Dorsolateral prefrontal cortex (tissue), 120 donors: ENCODE measurements at regions of chr1 and their contacts with region 1.

Region 1: DNA sequence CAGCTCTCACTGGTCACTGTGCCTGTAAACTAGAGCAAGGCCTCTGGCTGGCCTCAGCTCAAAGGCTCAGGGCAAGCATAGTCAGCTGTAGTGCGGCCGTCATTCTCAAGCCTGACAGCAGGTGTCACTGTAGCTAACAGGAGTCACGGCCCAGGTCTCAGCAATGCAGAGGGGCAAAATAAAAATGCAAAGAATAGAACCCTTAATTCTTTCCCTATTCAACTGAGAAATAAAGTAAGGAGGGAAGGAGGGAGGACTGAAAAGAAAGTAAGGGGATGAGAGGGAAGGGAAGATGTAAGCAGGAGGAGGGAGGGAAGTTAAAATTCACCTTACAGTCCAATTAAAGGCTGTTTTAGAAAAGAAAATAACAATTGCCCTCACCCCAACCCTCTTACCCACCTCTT is 106.1 kb downstream of the KIAA0319L start:
- DNase-seq: peak; percentile 80 to 94 (median 86)
- H3K4me3 ChIP-seq: no peak overlapping the region
- H3K27ac ChIP-seq: peak overlapping the region in 43 of 59 donors; percentile 1 to 79 (median 51)
- H3K27me3 ChIP-seq: no peaks in the 10 kb centered on the region
- CTCF ChIP-seq: peak; percentile 50 to 94 (median 87)

Region 2: GRCh38 chr1:35143737-35144508 is 307.2 kb before region 1 on chr1:
- intact Hi-C with region 1: no loop called
- DNase-seq: no peak
- H3K4me3 ChIP-seq: no peak overlapping the region
- H3K27ac ChIP-seq: no peak overlapping the region
- H3K27me3 ChIP-seq: no peaks in the 10 kb centered on the region
- CTCF ChIP-seq: no peak

Region 3: GRCh38 chr1:35202048-35202719 is 248.9 kb before region 1 on chr1:
- intact Hi-C with region 1: loop called in 1 of 2 experiments (anchors 10 kb)
- DNase-seq: peak in 9 of 10 donors; percentile 60 to 85 (median 69)
- H3K4me3 ChIP-seq: peak overlapping the region in 54 of 59 donors; percentile 1 to 60 (median 36)
- H3K27ac ChIP-seq: peak overlapping the region in 10 of 59 donors; percentile 1 to 49 (median 17)
- H3K27me3 ChIP-seq: no peaks in the 10 kb centered on the region
- CTCF ChIP-seq: peak; percentile 73 to 94 (median 87)

Region 4: DNA sequence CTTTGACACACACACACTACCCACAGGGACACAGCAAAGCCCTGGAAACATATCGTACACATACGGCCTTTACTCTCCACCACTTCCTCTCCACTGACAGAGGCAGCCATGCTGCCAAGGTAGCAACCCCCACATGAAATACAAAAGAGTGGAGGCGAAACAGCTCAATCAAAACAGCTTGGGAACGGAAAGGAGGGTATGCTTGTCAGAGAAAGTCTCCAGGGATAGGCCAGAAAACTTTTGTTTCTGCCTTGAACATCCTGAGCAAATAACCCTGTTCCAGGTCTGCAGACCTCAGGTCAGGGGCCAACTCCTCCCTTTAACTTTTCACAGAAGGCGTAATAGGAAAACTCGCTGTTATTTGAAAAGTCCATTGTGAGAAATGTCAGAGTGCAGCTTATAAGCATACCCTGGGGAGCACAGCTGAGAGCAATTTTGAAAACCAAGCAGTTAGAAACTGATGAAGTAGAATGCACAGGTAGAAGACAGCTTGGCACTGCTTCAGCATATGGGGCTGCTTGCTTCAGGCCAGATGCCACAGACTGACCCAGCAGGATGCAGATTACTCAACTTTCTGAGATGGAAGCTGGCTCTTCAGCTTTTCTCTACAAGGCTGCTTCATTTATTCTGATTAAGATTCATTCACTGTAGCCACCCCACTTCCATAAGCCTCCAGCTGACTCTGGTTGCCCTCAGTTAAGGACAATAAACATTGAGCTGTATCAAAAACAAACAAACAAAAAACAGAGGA is 88.1 kb after region 1 on chr1:
- intact Hi-C with region 1: loop called (anchors 1 to 5 kb)
- DNase-seq: peak in 1 of 10 donors; percentile 32
- H3K4me3 ChIP-seq: peak overlapping the region in 1 of 59 donors; percentile 15
- H3K27ac ChIP-seq: peak overlapping the region in 55 of 59 donors; percentile 15 to 86 (median 68)
- H3K27me3 ChIP-seq: no peaks in the 10 kb centered on the region
- CTCF ChIP-seq: no peak

Region 5: GRCh38 chr1:35544978-35545377 is 93.9 kb after region 1 on chr1:
- intact Hi-C with region 1: loop called in 1 of 2 experiments (anchors 1 kb)
- DNase-seq: peak in 3 of 10 donors; percentile 32 to 62 (median 55)
- H3K4me3 ChIP-seq: peak overlapping the region in 2 of 59 donors; percentile 1 to 15
- H3K27ac ChIP-seq: peak overlapping the region in 7 of 59 donors; percentile 14 to 61 (median 30)
- H3K27me3 ChIP-seq: no peaks in the 10 kb centered on the region
- CTCF ChIP-seq: peak in 54 of 56 donors; percentile 31 to 79 (median 57)

Region 6: GRCh38 chr1:35726450-35727433 is 275.6 kb after region 1 on chr1:
- intact Hi-C with region 1: loop called (anchors 2 to 5 kb)
- DNase-seq: peak in 9 of 10 donors; percentile 41 to 74 (median 64)
- H3K4me3 ChIP-seq: peak overlapping the region in 2 of 59 donors; percentile 1 to 15
- H3K27ac ChIP-seq: peak overlapping the region in 13 of 59 donors; percentile 3 to 75 (median 55)
- H3K27me3 ChIP-seq: no peaks in the 10 kb centered on the region
- CTCF ChIP-seq: peak; percentile 43 to 95 (median 90)